Naive thymus-derived CD4-positive, alpha-beta T cell (primary cell): ENCODE measurements at regions of chr12 and their contacts with region 1.

Region 1: DNA sequence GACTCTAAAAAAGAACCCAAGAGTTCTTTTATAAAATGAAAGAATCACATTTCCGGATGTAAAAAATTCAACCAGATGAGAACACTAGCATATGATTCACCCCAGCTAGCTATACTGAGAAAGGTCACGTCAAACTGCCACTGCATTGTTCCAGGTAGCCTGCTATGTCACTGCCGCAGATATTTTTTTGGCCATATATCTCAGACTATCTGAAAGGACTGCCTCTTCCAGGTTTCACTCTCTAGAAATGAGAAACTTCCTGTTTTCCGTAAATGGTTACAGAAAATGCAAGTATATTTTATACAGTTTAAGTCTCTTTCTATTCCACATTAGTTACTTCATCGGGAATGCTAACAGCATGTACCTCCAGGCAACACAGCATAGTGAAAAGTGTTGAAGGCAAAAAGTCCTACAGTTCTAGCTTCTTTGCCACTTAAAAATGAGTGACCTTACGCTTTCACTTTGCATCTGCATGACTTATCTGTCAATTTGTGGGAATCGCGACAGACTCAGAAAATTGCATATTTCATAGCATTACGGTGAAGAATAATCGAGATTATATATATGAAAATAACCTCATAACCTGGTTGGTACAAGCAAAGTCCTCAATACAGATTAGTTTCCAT is 105.2 kb downstream of the MED13L start:
- DNase-seq: peak in 1 of 9 donors; percentile 38
- ATAC-seq: peak; percentile 88
- H3K4me3 ChIP-seq: peak overlapping the region; percentile 8
- H3K4me3 Mint-ChIP-seq: peak overlapping the region; percentile 3 to 79 (median 70)
- H3K27ac ChIP-seq: no peak overlapping the region
- H3K27ac Mint-ChIP-seq: peak overlapping the region; percentile 1 to 90 (median 35)
- H3K4me1 ChIP-seq: peaks cover 7% of the 10 kb centered on the region in 2 donors
- H3K4me1 Mint-ChIP-seq: peaks cover 52 to 94% (median 85%) of the 10 kb centered on the region in 7 donors
- H3K27me3 ChIP-seq: no peaks in the 10 kb centered on the region
- H3K27me3 Mint-ChIP-seq: no peaks in the 10 kb centered on the region

Region 2: GRCh38 chr12:115960868-115961802 is 211.2 kb before region 1 on chr12:
- CTCF ChIA-PET with region 1: no interaction called
- POLR2A ChIA-PET with region 1: no interaction called
- intact Hi-C with region 1: no loop called
- DNase-seq: peak in 1 of 9 donors; percentile 32
- ATAC-seq: no peak
- H3K4me3 ChIP-seq: no peak overlapping the region
- H3K4me3 Mint-ChIP-seq: peak overlapping the region in 2 of 10 donors; percentile 5 to 10
- H3K27ac ChIP-seq: no peak overlapping the region
- H3K27ac Mint-ChIP-seq: peak overlapping the region in 4 of 9 donors; percentile 29 to 76 (median 72)
- H3K4me1 ChIP-seq: no peaks in the 10 kb centered on the region
- H3K4me1 Mint-ChIP-seq: peaks cover 0 to 59% (median 0%) of the 10 kb centered on the region in 7 donors
- H3K27me3 ChIP-seq: no peaks in the 10 kb centered on the region
- H3K27me3 Mint-ChIP-seq: no peaks in the 10 kb centered on the region

Region 3: DNA sequence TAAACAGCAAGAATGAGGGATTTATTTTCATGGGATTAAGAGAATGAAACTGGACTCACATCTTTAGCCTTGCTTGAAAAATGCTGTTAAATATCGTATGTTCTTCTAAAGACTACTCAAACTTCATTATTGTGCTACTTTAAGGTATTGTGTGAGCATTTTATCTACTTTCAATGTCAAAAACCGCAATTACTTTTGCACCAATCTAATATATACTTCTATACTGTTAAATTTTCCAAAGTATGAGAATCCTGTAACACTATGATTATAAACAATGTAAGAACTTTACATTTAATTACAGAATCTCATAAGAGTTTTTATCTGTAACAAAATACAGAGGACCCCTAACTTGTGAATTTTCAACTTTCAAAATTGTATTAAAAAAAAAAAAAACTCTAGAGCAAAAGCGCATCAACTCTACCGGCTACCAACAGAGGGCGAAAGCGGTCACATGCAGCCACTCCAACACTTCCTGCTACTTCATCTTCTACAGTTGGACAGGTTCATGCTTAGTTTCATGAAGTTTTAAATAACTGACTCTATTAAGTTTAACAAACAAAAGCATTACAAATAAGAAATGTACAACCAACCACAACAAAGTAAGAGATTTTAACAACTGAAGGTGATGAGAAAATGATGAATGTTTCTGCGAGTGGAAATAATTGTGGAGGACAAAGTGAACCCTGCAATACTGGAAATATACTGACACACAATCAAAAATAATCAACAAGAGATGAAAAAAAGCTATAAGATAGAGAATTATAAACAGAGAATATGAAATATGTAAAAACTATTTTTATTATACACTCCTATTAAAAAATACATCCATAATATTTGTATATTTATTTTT is 105.7 kb before region 1 on chr12:
- CTCF ChIA-PET with region 1: no interaction called
- POLR2A ChIA-PET with region 1: no interaction called
- intact Hi-C with region 1: loop called in 1 of 2 experiments (anchors 5 kb)
- DNase-seq: peak; percentile 18 to 58 (median 49)
- ATAC-seq: peak; percentile 87
- H3K4me3 ChIP-seq: no peak overlapping the region
- H3K4me3 Mint-ChIP-seq: peak overlapping the region in 1 of 10 donors; percentile 14
- H3K27ac ChIP-seq: no peak overlapping the region
- H3K27ac Mint-ChIP-seq: peak overlapping the region in 4 of 9 donors; percentile 3 to 80 (median 10)
- H3K4me1 ChIP-seq: no peaks in the 10 kb centered on the region
- H3K4me1 Mint-ChIP-seq: peaks cover 22 to 72% (median 55%) of the 10 kb centered on the region in 7 donors
- H3K27me3 ChIP-seq: no peaks in the 10 kb centered on the region
- H3K27me3 Mint-ChIP-seq: no peaks in the 10 kb centered on the region

Region 4: DNA sequence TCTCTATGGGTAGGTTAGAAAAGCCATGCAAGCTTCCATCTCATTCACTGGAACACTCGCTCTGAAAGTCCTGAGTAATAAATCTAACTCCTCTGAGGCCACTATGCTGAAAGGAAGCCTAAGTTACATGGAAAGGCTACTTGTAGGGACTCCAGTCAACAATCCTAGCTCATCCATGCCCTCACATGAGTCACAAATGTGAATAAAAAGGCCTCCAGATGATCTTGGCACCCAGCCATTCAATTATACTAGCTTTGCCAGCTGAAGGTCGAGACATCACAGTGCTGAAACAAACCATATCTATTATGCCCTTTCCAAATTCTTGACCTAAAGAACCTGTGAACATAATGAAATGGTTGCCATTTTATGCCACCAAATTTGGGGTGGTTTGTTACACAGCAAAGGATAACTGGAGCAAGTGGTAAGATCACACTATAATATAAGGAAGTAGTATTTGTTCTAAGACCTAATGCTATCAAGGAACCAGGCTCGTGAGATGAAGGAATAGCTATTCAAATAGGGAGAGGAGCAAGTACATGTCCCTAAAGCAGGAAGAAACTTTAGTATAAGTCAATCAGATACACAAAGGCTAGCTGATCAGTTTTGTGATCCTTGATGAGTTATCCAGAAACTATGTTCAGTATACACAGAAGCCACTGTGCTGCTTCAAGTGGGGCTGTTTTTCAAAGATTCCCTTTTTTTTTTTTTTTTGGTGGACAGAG is 37.0 kb before region 1 on chr12:
- CTCF ChIA-PET with region 1: no interaction called
- POLR2A ChIA-PET with region 1: no interaction called
- intact Hi-C with region 1: loop called in 1 of 2 experiments (anchors 1 kb)
- DNase-seq: no peak
- ATAC-seq: no peak
- H3K4me3 ChIP-seq: no peak overlapping the region
- H3K4me3 Mint-ChIP-seq: peak overlapping the region in 2 of 10 donors; percentile 16 to 55
- H3K27ac ChIP-seq: no peak overlapping the region
- H3K27ac Mint-ChIP-seq: peak overlapping the region in 3 of 9 donors; percentile 15 to 91 (median 50)
- H3K4me1 ChIP-seq: peaks cover 4 to 36% of the 10 kb centered on the region in 2 donors
- H3K4me1 Mint-ChIP-seq: peaks cover 56 to 88% (median 79%) of the 10 kb centered on the region in 7 donors
- H3K27me3 ChIP-seq: no peaks in the 10 kb centered on the region
- H3K27me3 Mint-ChIP-seq: no peaks in the 10 kb centered on the region

Region 5: GRCh38 chr12:116186482-116187150 is 14.3 kb after region 1 on chr12:
- CTCF ChIA-PET with region 1: no interaction called
- POLR2A ChIA-PET with region 1: interaction called, 5 read pairs
- intact Hi-C with region 1: loop called (anchors 1 to 2 kb)
- DNase-seq: no peak
- ATAC-seq: no peak
- H3K4me3 ChIP-seq: no peak overlapping the region
- H3K4me3 Mint-ChIP-seq: peak overlapping the region in 8 of 10 donors; percentile 0 to 49 (median 12)
- H3K27ac ChIP-seq: no peak overlapping the region
- H3K27ac Mint-ChIP-seq: peak overlapping the region in 5 of 9 donors; percentile 6 to 21 (median 9)
- H3K4me1 ChIP-seq: peaks cover 0 to 29% of the 10 kb centered on the region in 2 donors
- H3K4me1 Mint-ChIP-seq: peaks cover 60 to 92% (median 86%) of the 10 kb centered on the region in 7 donors
- H3K27me3 ChIP-seq: no peaks in the 10 kb centered on the region
- H3K27me3 Mint-ChIP-seq: no peaks in the 10 kb centered on the region

Region 6: DNA sequence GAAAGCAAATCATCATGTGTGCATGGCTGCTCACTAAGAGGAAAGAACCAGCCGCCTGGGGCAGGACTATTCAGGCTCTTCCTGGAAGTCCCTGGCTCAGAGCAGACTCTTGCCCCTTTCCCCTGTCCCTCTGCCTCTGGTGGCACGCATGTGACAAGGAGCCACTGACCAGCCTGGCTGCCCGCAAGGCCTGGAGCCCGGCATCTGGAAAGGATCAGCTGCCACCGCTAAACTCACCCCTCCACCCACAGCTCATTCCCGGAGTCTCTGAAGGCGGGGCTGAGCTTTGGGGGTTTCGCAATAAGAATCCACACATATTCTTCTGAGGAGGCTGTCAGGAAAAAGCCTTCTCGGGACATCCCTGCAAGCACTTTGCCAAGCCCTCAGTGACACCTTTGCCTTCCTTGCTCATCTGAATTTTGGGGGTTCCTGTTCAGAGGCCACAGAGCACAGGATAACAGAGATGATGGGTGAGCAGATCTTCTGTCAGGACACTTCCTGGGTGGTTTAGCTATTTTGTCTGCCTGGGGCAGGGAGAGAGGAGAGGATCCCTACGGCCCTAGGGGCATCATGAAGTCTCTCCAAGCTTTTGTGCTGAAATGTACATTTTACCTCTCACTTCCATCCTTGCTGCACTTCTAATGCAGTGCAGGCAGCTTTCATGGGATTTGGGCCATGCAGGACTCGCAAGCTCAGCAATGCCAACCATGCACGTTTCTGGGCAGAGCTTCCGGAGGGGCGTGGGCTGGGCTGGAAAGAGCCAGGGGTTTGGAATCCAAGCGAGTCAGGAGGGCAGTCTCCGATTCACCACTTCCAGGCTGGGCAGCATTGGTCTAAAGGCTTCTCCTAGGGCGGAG is 262.0 kb after region 1 on chr12:
- CTCF ChIA-PET with region 1: no interaction called
- POLR2A ChIA-PET with region 1: no interaction called
- intact Hi-C with region 1: no loop called
- DNase-seq: no peak
- ATAC-seq: peak; percentile 18
- H3K4me3 ChIP-seq: no peak overlapping the region
- H3K4me3 Mint-ChIP-seq: no peak overlapping the region
- H3K27ac ChIP-seq: no peak overlapping the region
- H3K27ac Mint-ChIP-seq: no peak overlapping the region
- H3K4me1 ChIP-seq: no peaks in the 10 kb centered on the region
- H3K4me1 Mint-ChIP-seq: peaks cover 0 to 6% (median 5%) of the 10 kb centered on the region in 7 donors
- H3K27me3 ChIP-seq: no peaks in the 10 kb centered on the region
- H3K27me3 Mint-ChIP-seq: peaks cover 0 to 2% (median 0%) of the 10 kb centered on the region in 5 donors